AG04450 (cell line): ENCODE measurements at regions of chr7 and their contacts with region 1.

Region 1: GRCh38 chr7:74141705-74142104 is 32.5 kb upstream of the EIF4H start:
- DNase-seq: no peak
- H3K4me3 ChIP-seq: no peak overlapping the region
- H3K27ac ChIP-seq: no peak overlapping the region
- H3K27me3 ChIP-seq: peaks cover 3% of the 10 kb centered on the region
- CTCF ChIP-seq: no peak

Region 2: GRCh38 chr7:73909051-73909941 is 232.4 kb before region 1 on chr7:
- CTCF ChIA-PET with region 1: no interaction called
- POLR2A ChIA-PET with region 1: no interaction called
- DNase-seq: no peak
- H3K4me3 ChIP-seq: no peak overlapping the region
- H3K27ac ChIP-seq: no peak overlapping the region
- H3K27me3 ChIP-seq: peaks cover 3% of the 10 kb centered on the region
- CTCF ChIP-seq: no peak

Region 3: DNA sequence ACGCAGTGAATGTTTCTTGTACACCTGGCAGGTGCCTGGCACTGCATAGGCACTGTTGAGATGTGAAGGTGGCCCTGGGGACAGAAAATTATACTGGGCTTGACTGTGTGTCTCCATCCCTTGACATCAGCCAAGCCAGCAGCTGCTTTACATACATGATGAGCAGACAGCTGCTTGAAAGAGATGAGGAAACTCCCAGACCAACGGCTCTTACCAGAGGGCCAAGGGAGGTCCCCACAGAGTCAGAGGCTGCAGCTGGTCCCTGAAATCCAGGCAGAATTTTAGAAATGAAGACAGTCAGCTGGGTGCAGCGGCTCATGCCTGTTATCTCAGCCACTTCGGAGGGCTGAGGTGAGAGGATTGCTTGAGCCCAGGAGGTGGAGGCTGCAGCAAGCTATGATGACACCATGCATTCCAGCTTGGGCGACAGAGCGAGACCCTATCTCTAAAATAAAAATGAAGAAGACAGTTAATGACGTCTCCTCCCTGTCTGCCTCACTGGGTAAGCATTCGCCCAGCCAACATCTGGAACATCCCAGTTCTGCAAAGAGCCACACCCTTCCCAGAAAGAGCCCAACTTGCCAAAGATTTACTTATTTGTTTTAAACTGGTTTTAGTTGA is 40.5 kb before region 1 on chr7:
- CTCF ChIA-PET with region 1: no interaction called
- POLR2A ChIA-PET with region 1: no interaction called
- DNase-seq: no peak
- H3K4me3 ChIP-seq: no peak overlapping the region
- H3K27ac ChIP-seq: no peak overlapping the region
- H3K27me3 ChIP-seq: no peaks in the 10 kb centered on the region
- CTCF ChIP-seq: no peak

Region 4: DNA sequence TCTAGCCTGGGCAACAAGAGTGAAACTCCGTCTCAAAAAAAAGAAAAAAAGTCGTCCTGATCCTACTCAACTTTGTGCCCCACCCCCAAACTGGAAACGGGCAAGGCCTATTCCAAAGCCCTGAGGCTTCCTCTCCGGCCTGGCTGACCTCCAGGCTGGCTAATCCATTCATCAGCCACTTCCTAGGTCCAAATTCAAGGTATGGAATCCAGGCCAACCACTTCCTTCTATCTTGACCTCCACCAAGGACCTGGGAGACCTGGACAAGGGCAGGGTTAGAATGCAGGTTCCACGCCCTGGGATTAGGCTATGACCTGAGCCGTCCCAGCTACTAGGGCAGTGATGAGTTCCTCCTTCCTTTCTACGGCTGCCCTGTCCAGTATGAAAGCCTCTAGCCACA is 12.1 kb after region 1 on chr7:
- CTCF ChIA-PET with region 1: no interaction called
- POLR2A ChIA-PET with region 1: interaction called, 12 read pairs
- DNase-seq: no peak
- H3K4me3 ChIP-seq: no peak overlapping the region
- H3K27ac ChIP-seq: no peak overlapping the region
- H3K27me3 ChIP-seq: no peaks in the 10 kb centered on the region
- CTCF ChIP-seq: no peak